OCI-LY7 (cell line): ENCODE measurements at regions of chr12 and their contacts with region 1.

Region 1: DNA sequence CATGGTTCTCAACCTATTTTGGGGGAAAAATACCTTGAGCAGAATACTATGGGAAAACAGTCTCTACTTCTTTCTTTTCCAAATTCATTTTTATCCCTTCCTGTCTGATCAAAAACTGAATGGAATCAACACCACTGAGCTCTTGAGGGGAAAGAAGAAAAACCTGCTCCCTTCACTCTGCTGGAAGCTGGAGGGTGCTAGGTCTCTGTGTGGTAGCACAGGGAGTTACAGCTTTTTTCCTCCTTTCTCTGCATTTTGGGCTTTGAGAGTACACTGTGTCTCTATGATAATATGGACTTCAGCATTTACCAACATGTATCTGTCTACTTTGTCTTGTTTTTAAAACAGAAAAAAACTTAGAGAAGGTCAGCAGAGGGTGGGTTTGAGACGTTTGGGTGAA is 417.2 kb upstream of the SYT1 start:
- DNase-seq: no peak
- H3K4me3 ChIP-seq: no peak overlapping the region
- H3K27ac ChIP-seq: no peak overlapping the region
- H3K4me1 ChIP-seq: peaks cover 12% of the 10 kb centered on the region
- CTCF ChIP-seq: no peak

Region 2: DNA sequence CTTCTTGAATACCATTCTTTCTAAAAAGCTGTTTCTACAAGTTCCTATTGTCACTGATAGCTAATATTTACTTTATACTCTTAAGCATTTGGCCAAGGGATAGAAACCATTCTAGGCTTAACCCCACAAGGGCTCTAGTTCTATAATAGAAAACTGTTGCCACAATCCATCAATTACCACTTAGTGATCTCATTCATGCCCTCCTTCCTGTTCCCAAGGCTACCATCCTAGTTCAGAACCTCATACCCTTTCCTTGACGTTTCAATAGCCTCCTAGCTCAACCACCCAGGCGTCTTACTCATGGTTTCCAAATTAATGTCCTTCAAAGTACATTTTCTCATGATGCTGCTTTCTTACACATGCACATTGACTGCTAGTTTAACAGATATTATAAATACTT is 123.1 kb before region 1 on chr12:
- CTCF ChIA-PET with region 1: no interaction called
- POLR2A ChIA-PET with region 1: no interaction called
- intact Hi-C with region 1: no loop called
- DNase-seq: no peak
- H3K4me3 ChIP-seq: no peak overlapping the region
- H3K27ac ChIP-seq: no peak overlapping the region
- H3K4me1 ChIP-seq: no peaks in the 10 kb centered on the region
- CTCF ChIP-seq: no peak

Region 3: DNA sequence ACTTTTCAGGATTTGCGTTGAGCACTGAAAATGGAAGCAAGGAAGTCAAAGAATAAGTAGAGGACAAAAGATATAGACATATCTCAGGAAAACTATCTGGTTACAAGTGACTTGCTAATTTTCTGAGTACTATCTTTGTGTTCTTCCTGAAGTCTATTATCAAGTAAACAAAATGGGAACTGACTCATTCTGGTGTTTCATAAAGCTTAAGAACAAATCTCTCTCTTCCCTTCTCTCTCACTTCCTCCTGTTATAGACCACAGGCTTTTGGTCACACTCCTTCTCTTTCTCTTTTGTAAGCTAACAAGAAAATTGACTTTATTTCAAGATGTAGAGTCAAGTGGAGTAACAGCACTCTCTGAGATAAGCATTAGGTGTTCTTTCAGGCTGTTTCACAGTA is 10.6 kb after region 1 on chr12:
- CTCF ChIA-PET with region 1: no interaction called
- POLR2A ChIA-PET with region 1: interaction called, 10 read pairs
- intact Hi-C with region 1: no loop called
- DNase-seq: peak; percentile 66
- H3K4me3 ChIP-seq: peak overlapping the region; percentile 15
- H3K27ac ChIP-seq: peak overlapping the region; percentile 36
- H3K4me1 ChIP-seq: peaks cover 15% of the 10 kb centered on the region
- CTCF ChIP-seq: no peak